ENCODE measurements at regions of chr16 and their contacts with region 1.

Region 1: DNA sequence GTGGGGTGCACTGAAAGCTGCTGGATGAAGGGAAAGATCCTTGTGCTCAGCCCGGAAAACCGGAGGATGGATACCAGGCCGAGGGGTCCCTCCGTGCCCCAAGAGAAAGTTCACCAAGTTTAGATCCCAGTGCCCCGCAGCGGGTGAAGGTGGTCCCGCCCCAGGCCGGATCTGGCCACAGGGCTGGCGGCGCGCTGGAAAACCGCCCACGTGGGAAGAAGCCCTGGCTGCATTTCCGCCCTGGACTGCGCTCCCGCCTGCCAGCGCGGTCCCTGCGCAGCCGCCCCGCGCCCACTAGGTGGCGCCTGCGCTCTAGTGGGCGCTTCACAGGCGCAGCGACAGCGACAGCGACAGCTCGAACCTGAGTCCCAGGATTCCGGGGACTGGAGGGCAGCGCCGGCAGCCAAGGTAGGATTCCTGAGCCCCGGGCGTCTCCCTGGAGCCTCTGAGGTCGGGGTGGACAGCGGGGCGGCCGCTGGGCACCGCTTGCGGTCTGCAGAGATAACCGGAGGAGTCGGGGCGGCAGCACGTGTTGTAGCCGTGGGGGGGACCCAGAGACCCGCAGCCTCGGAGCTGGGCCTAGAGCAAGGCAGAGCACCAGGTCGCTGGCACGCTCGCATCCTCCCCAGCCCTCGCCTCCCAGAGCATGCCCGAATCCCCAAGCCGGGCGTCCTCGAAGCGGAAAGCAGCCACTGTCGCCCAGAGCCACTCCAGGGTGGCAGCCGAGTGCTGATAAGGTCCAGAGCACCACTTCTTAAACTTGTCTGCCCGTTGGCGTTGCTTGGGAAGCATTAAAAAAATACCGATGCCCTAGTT is at the start of gene CHD9:
- DNase-seq: peak; percentile 68 to 96
- H3K4me3 ChIP-seq: peak within 1 kb of the TSS; percentile 45
- CTCF ChIP-seq: peak in 1 of 3 donors; percentile 96
- POLR2A ChIP-seq: peak in 1 of 2 donors; percentile 11
- total RNA-seq, gene CHD9: 49.2 to 85.7 (median 67.7) TPM

Region 2: DNA sequence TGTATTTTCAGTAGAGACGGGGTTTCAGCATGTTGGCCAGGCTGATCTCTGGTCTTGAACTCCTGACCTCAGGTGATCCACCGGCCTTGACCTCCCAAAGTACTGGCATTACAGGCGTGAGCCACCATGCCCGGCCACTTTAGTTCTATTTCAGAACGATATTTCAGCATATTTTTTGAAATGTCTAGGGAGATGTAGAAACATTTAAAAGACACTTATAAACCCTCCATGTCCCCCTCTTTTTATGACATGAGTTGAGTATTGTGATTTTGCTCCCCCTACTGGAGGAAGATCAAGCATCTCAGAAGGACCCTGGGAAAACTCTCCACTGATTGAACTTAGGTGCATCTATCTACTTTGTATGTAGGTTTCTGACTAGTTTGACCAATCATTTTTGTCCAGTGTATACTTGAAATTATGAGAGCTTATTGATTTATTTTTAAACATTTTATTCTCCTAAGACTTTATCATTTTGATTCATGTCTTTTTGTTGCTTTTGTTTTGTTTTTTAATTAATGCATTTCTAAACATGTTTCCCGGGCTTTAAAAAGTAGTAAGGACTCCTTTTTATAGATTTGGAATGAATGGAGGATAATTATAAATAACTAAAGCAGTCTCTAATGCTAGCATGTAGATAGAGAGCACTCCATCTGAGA is 105.0 kb after region 1 on chr16:
- intact Hi-C with region 1: loop called (anchors 2 kb)
- DNase-seq: no peak
- H3K4me3 ChIP-seq: no peak overlapping the region
- CTCF ChIP-seq: no peak
- POLR2A ChIP-seq: no peak

Region 3: DNA sequence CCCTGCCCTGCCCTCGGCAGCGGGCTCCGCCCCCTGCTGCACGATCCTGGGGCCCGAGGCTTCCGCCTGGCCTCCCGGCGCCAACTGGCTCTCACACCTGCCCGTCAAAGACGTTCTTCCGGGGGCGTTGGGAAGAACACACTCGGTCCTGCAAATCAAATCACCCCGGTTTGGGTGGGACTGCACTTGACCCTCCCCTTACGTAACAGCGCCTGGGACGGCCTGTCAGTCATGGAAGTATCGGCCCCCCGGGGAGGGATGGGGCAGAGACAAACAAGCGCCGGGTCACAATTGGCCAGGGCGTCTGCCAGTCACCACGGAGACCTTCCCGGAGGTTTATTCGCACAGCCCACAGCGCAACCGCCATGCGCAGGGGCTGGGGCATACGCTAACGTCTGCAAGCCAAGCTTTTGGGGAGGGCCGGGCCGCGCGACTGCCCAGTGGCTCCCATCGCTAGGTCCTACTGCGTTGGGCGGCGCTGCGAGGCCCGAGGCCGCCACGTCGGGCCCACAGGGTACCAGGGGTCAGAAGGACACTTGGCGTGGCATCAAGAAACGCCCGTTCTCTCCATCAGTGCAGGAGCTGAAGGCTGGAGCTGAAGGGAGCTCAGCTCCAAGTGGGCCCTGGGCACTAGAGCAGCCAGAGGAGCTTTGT is 448.5 kb after region 1 on chr16:
- intact Hi-C with region 1: loop called (anchors 10 kb)
- DNase-seq: peak; percentile 100
- H3K4me3 ChIP-seq: no peak overlapping the region
- CTCF ChIP-seq: no peak
- POLR2A ChIP-seq: no peak